ENCODE measurements at regions of chr12 and their contacts with region 1.

Region 1: GRCh38 chr12:96906849-96907670 is at the start of gene NEDD1:
- DNase-seq: peak; percentile 92
- ATAC-seq: peak; percentile 86
- H3K4me3 Mint-ChIP-seq: peak within 1 kb of the TSS; percentile 97
- H3K27ac Mint-ChIP-seq: peak within 1 kb of the TSS; percentile 94
- H3K4me1 Mint-ChIP-seq: peaks cover 41% of the 10 kb centered on the region
- H3K27me3 Mint-ChIP-seq: peaks cover 18% of the 10 kb centered on the region
- total RNA-seq, gene NEDD1: 42.0 to 42.3 TPM

Region 2: GRCh38 chr12:96919510-96920210 is 12.6 kb after region 1 on chr12:
- POLR2A ChIA-PET with region 1: interaction called, 11 read pairs
- DNase-seq: no peak
- ATAC-seq: no peak
- H3K4me3 Mint-ChIP-seq: no peak overlapping the region
- H3K27ac Mint-ChIP-seq: no peak overlapping the region
- H3K4me1 Mint-ChIP-seq: peaks cover 8% of the 10 kb centered on the region
- H3K27me3 Mint-ChIP-seq: no peaks in the 10 kb centered on the region

Region 3: GRCh38 chr12:97082029-97082428 is 175.0 kb after region 1 on chr12:
- POLR2A ChIA-PET with region 1: no interaction called
- DNase-seq: no peak
- ATAC-seq: no peak
- H3K4me3 Mint-ChIP-seq: no peak overlapping the region
- H3K27ac Mint-ChIP-seq: no peak overlapping the region
- H3K4me1 Mint-ChIP-seq: no peaks in the 10 kb centered on the region
- H3K27me3 Mint-ChIP-seq: no peaks in the 10 kb centered on the region

Measured in activated naive CD8-positive, alpha-beta T cell treated with anti-CD3 and anti-CD28 coated beads, Interleukin-2, amount 10 ng/mL, durations not matched to agents 7 days and 5 days (primary cell).